ENCODE measurements at regions of chr9 and their contacts with region 1.

Region 1: GRCh38 chr9:129333953-129334724 is 156.1 kb upstream of the IER5L start:
- DNase-seq: peak; percentile 98 to 99
- H3K4me3 ChIP-seq: peak overlapping the region; percentile 43; the same call in 1 of the 2 replicates
- H3K27ac ChIP-seq: peak overlapping the region; percentile 94
- H3K4me1 ChIP-seq: peaks cover 45% of the 10 kb centered on the region
- H3K27me3 ChIP-seq: no peaks in the 10 kb centered on the region
- CTCF ChIP-seq: no peak; the same call in 1 of the 2 replicates

Region 2: GRCh38 chr9:129166623-129167557 is 167.2 kb before region 1 on chr9:
- CTCF ChIA-PET with region 1: no interaction called
- POLR2A ChIA-PET with region 1: interaction called, 20 read pairs
- intact Hi-C with region 1: no loop called
- DNase-seq: peak; percentile 89 to 90
- H3K4me3 ChIP-seq: peak overlapping the region; percentile 56; the same call in 1 of the 2 replicates
- H3K27ac ChIP-seq: peak overlapping the region; percentile 90
- H3K4me1 ChIP-seq: peaks cover 43% of the 10 kb centered on the region
- H3K27me3 ChIP-seq: no peaks in the 10 kb centered on the region
- CTCF ChIP-seq: no peak

Region 3: DNA sequence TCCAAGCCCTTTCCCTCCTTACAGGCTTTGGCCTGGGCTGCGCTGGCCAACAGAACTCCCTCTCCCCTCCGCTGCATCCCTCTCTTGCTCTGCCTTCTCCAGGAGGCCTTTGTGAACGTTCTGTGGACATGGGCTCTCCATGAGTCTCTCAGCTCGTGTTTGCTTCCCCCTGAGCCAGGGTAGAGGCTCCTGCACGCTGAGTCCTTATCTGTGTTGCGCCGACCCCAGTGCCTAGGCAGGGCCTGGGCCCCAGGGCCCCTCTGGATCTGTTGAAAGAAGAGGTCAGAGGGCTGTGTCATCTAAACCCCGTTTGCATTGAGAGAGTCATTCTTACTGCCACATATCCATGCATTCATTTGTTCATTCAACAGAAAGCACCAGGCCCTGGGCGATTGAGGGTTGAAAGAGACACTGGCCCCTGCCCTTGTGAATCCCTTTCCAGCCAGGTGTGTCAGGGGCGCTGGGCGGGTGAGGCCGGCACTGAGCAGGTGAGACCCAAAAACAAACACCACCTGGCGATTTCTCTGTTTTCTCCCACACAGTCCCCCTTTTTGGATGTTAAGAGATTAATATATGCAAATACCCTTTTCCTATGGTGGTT is 44.9 kb before region 1 on chr9:
- CTCF ChIA-PET with region 1: interaction called, 11 read pairs
- POLR2A ChIA-PET with region 1: no interaction called
- intact Hi-C with region 1: no loop called
- DNase-seq: no peak
- H3K4me3 ChIP-seq: no peak overlapping the region
- H3K27ac ChIP-seq: no peak overlapping the region
- H3K4me1 ChIP-seq: no peaks in the 10 kb centered on the region
- H3K27me3 ChIP-seq: no peaks in the 10 kb centered on the region
- CTCF ChIP-seq: no peak

Region 4: GRCh38 chr9:129394061-129394885 is 60.1 kb after region 1 on chr9:
- CTCF ChIA-PET with region 1: no interaction called
- POLR2A ChIA-PET with region 1: no interaction called
- intact Hi-C with region 1: no loop called
- DNase-seq: no peak
- H3K4me3 ChIP-seq: no peak overlapping the region
- H3K27ac ChIP-seq: no peak overlapping the region
- H3K4me1 ChIP-seq: no peaks in the 10 kb centered on the region
- H3K27me3 ChIP-seq: no peaks in the 10 kb centered on the region
- CTCF ChIP-seq: no peak

Region 5: GRCh38 chr9:129413537-129414376 is 79.6 kb after region 1 on chr9:
- CTCF ChIA-PET with region 1: no interaction called
- POLR2A ChIA-PET with region 1: no interaction called
- intact Hi-C with region 1: loop called (anchors 1 kb)
- DNase-seq: peak; percentile 87 to 99
- H3K4me3 ChIP-seq: peak overlapping the region; percentile 77
- H3K27ac ChIP-seq: peak overlapping the region; percentile 85
- H3K4me1 ChIP-seq: peaks cover 24% of the 10 kb centered on the region
- H3K27me3 ChIP-seq: no peaks in the 10 kb centered on the region
- CTCF ChIP-seq: no peak

Region 6: DNA sequence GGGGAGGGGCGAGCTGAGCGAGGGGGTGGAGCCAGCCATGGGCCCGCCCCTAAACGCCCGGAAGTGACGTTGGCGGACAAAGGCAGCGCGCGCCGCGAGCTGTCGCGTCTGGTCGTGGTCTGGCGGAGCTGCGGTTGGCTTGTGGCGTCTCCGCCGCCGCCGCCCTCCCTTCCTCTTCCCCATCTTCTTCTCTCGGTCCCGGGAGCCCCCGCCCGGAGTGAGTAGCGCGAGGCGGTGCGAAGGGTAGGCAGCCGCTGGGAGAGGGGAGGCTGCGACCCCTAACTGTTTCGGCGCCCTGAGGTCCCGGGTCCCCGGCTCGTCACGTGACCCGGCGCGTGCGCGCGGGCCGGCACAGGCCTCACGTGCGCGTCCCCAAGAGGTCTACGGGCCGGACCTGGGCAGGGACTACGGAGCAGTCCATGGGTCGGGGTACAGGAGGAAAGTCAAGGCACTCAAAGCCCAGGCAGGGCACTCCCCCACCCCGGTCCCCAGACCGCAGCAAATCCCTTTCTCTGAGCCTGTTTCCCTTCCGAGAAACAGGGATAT is 292.0 kb after region 1 on chr9 and contains the start of gene NTMT1:
- CTCF ChIA-PET with region 1: interaction called, 3 read pairs
- POLR2A ChIA-PET with region 1: interaction called, 10 read pairs
- intact Hi-C with region 1: no loop called
- DNase-seq: peak; percentile 53 to 85
- H3K4me3 ChIP-seq: peak within 1 kb of the TSS; percentile 99
- H3K27ac ChIP-seq: peak within 1 kb of the TSS; percentile 33; the same call in 1 of the 2 replicates
- H3K4me1 ChIP-seq: peaks cover 32% of the 10 kb centered on the region
- H3K27me3 ChIP-seq: no peaks in the 10 kb centered on the region
- CTCF ChIP-seq: no peak
- total RNA-seq, gene NTMT1: 52.5 and 53.1 TPM in 2 replicates

Measured in PC-9 (cell line).